Dendritic cell treated with granulocyte-macrophage colony-stimulating factor and Interleukin-4, amounts not matched to agents 40 ng/mL and 50 ng/mL, for 4 days (primary cell): ENCODE measurements at regions of chr6 and their contacts with region 1.

Region 1: GRCh38 chr6:53250176-53251032 is 98.3 kb downstream of the ELOVL5 start:
- H3K4me3 Mint-ChIP-seq: no peak overlapping the region
- H3K27ac Mint-ChIP-seq: no peak overlapping the region
- H3K4me1 Mint-ChIP-seq: peaks cover 6% of the 10 kb centered on the region
- H3K27me3 Mint-ChIP-seq: no peaks in the 10 kb centered on the region

Region 2: DNA sequence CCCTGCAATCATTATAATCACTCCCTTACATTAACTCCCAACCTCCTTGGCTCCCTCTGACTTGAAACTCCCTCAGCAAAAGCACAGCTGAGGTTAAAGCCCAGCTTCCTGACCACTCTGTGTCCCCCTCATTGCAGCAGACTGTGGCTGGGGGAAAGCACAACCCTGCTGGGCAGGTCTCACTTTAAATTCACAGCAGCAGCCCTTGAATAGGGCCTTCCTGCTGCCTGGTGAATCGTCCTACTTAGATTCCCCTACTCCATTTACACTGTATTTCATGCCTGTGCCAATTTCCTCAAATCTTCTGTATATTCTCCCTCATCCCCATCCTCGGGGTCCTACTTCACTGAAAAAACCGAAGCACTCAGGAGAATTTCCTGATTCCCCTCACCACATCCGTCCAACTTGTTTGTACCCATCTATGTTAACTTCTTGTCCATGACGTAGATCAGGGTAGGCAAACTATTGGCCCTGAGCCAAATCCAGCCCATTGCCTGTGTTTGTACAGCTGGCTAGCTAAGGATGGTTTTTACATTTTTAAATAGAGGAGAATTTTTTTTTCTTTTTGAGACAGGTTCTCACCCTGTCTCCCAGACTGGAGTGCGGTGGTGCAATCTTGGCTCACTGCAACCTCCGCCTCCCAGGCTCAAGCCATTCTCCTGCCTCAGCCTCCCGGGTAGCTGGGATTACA is 70.3 kb before region 1 on chr6:
- intact Hi-C with region 1: loop called (anchors 5 kb)
- H3K4me3 Mint-ChIP-seq: no peak overlapping the region
- H3K27ac Mint-ChIP-seq: no peak overlapping the region
- H3K4me1 Mint-ChIP-seq: peaks cover 26% of the 10 kb centered on the region
- H3K27me3 Mint-ChIP-seq: no peaks in the 10 kb centered on the region

Region 3: GRCh38 chr6:53216301-53216700 is 34.1 kb before region 1 on chr6:
- intact Hi-C with region 1: no loop called
- H3K4me3 Mint-ChIP-seq: no peak overlapping the region
- H3K27ac Mint-ChIP-seq: no peak overlapping the region
- H3K4me1 Mint-ChIP-seq: peaks cover 6% of the 10 kb centered on the region
- H3K27me3 Mint-ChIP-seq: no peaks in the 10 kb centered on the region

Region 4: GRCh38 chr6:53294095-53294494 is 43.7 kb after region 1 on chr6:
- intact Hi-C with region 1: loop called (anchors 1 kb)
- H3K4me3 Mint-ChIP-seq: no peak overlapping the region
- H3K27ac Mint-ChIP-seq: no peak overlapping the region
- H3K4me1 Mint-ChIP-seq: peaks cover 26% of the 10 kb centered on the region
- H3K27me3 Mint-ChIP-seq: no peaks in the 10 kb centered on the region